Naive thymus-derived CD4-positive, alpha-beta T cell (primary cell): ENCODE measurements at regions of chr16 and their contacts with region 1.

Region 1: GRCh38 chr16:75432828-75433731 is at the start of gene CFDP1:
- DNase-seq: peak; percentile 93 to 98 (median 95)
- ATAC-seq: peak; percentile 92
- H3K4me3 ChIP-seq: peak within 1 kb of the TSS; percentile 92
- H3K4me3 Mint-ChIP-seq: peak within 1 kb of the TSS; percentile 87 to 99 (median 94)
- H3K27ac ChIP-seq: peak within 1 kb of the TSS; percentile 94
- H3K27ac Mint-ChIP-seq: peak within 1 kb of the TSS; percentile 94 to 100 (median 97)
- H3K4me1 ChIP-seq: peaks cover 5 to 9% of the 10 kb centered on the region in 2 donors
- H3K4me1 Mint-ChIP-seq: peaks cover 19 to 53% (median 43%) of the 10 kb centered on the region in 7 donors
- H3K27me3 ChIP-seq: no peaks in the 10 kb centered on the region
- H3K27me3 Mint-ChIP-seq: no peaks in the 10 kb centered on the region
- total RNA-seq, gene CFDP1: 34.9 to 41.4 (median 39.4) TPM

Region 2: DNA sequence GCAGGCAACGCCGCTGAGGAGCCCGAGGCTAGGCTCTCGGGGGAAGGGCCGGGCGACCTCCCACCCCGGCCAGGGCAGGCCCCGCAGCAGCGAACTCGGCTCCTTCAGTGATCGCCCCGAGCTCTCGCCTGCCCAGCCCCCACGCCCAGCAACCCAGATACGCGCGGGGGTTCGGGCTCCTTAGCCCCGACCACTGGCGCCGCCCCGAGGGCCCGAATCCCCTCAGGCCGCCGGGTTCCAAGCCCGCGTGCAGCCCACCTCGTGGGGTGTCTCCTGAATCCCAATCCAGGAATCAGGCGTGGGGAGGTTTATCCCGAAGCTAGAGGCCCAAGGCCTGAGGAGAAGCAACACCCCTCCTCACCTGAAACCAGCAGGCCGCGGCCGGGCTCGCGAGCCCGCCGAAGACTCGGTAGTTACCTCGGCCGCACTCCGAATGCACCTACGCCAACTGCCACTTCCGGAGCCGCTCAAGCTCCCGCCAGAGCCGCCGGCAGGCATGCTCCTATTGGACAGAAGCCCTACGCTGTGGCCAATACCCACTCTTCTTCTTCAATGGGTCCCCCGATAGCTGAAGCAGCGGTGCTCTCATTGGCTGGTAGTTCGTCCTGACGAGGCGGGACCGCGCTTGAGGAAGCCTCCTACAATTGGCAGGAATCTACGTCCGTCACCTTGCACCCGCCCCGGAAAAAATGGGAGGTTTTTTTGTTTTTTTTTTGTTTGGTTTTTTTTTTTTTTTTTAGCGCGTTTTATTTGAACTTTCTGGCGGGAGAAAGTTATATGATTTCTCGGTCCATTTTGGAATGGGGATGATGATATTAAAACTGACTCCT is 766.4 kb before region 1 on chr16 and contains the start of gene RFWD3:
- CTCF ChIA-PET with region 1: no interaction called
- POLR2A ChIA-PET with region 1: no interaction called
- intact Hi-C with region 1: loop called (anchors 1 kb)
- DNase-seq: peak; percentile 80 to 99 (median 97)
- ATAC-seq: peak; percentile 100
- H3K4me3 ChIP-seq: peak within 1 kb of the TSS; percentile 89
- H3K4me3 Mint-ChIP-seq: peak within 1 kb of the TSS; percentile 87 to 98 (median 95)
- H3K27ac ChIP-seq: peak within 1 kb of the TSS; percentile 86
- H3K27ac Mint-ChIP-seq: peak within 1 kb of the TSS; percentile 92 to 97 (median 95)
- H3K4me1 ChIP-seq: peaks cover 0 to 10% of the 10 kb centered on the region in 2 donors
- H3K4me1 Mint-ChIP-seq: peaks cover 26 to 48% (median 44%) of the 10 kb centered on the region in 7 donors
- H3K27me3 ChIP-seq: no peaks in the 10 kb centered on the region
- H3K27me3 Mint-ChIP-seq: peaks cover 0 to 2% (median 0%) of the 10 kb centered on the region in 5 donors
- total RNA-seq, gene RFWD3: 39.3 to 88.0 (median 56.9) TPM

Region 3: DNA sequence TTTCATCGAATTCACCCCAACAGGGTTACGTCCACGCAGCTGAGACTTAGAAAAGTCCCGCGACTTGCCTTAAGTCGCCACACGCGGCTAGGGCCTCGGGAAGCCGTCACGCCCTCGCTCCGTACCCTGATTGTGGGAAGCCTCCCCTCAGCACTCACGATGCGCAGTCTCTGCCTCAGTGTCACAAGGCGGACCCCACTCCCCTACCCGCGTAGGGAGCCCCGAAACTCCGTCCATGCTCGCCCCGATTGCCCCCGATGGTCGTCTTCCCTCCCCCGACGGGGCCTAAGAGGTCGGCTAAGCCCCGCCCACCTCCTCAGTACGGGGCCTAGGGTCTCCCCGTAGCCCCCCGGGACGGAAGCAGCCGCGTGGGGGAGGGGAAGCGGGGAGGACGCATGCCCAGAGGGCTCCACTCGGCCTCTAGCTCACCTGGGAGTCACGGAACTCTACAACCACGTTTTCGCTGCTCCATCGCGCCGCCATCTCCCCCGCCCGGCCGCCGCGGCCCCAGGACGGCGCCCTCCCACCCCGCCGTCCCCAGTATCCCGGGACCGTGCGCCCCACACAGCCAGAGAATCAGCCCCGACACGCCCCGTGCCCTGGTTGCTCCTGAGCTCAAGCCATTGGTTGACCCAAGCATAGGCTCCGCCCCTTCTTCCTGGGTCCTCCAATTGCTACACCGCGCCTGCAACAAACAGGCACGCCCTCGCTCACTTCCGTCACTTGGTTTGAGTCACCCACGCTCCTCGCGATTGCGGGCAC is 448.4 kb before region 1 on chr16 and contains the start of gene WDR59:
- CTCF ChIA-PET with region 1: no interaction called
- POLR2A ChIA-PET with region 1: interaction called, 4 read pairs
- intact Hi-C with region 1: loop called (anchors 1 to 2 kb)
- DNase-seq: peak; percentile 87 to 99 (median 98)
- ATAC-seq: peak; percentile 100
- H3K4me3 ChIP-seq: peak within 1 kb of the TSS; percentile 98
- H3K4me3 Mint-ChIP-seq: peak within 1 kb of the TSS; percentile 90 to 98 (median 95)
- H3K27ac ChIP-seq: peak within 1 kb of the TSS; percentile 86
- H3K27ac Mint-ChIP-seq: peak within 1 kb of the TSS; percentile 72 to 96 (median 92)
- H3K4me1 ChIP-seq: peaks cover 5 to 6% of the 10 kb centered on the region in 2 donors
- H3K4me1 Mint-ChIP-seq: peaks cover 0 to 27% (median 23%) of the 10 kb centered on the region in 7 donors
- H3K27me3 ChIP-seq: no peaks in the 10 kb centered on the region
- H3K27me3 Mint-ChIP-seq: no peaks in the 10 kb centered on the region
- total RNA-seq, gene WDR59: 82.7 to 130 (median 84.7) TPM

Region 4: GRCh38 chr16:75519881-75520280 is 86.8 kb after region 1 on chr16:
- CTCF ChIA-PET with region 1: interaction called, 4 read pairs
- POLR2A ChIA-PET with region 1: interaction called, 9 read pairs
- intact Hi-C with region 1: loop called (anchors 1 kb)
- DNase-seq: no peak
- ATAC-seq: no peak
- H3K4me3 ChIP-seq: no peak overlapping the region
- H3K4me3 Mint-ChIP-seq: no peak overlapping the region
- H3K27ac ChIP-seq: no peak overlapping the region
- H3K27ac Mint-ChIP-seq: no peak overlapping the region
- H3K4me1 ChIP-seq: peaks cover 0 to 3% of the 10 kb centered on the region in 2 donors
- H3K4me1 Mint-ChIP-seq: peaks cover 5 to 17% (median 13%) of the 10 kb centered on the region in 7 donors
- H3K27me3 ChIP-seq: no peaks in the 10 kb centered on the region
- H3K27me3 Mint-ChIP-seq: peaks cover 0 to 9% (median 0%) of the 10 kb centered on the region in 5 donors

Region 5: DNA sequence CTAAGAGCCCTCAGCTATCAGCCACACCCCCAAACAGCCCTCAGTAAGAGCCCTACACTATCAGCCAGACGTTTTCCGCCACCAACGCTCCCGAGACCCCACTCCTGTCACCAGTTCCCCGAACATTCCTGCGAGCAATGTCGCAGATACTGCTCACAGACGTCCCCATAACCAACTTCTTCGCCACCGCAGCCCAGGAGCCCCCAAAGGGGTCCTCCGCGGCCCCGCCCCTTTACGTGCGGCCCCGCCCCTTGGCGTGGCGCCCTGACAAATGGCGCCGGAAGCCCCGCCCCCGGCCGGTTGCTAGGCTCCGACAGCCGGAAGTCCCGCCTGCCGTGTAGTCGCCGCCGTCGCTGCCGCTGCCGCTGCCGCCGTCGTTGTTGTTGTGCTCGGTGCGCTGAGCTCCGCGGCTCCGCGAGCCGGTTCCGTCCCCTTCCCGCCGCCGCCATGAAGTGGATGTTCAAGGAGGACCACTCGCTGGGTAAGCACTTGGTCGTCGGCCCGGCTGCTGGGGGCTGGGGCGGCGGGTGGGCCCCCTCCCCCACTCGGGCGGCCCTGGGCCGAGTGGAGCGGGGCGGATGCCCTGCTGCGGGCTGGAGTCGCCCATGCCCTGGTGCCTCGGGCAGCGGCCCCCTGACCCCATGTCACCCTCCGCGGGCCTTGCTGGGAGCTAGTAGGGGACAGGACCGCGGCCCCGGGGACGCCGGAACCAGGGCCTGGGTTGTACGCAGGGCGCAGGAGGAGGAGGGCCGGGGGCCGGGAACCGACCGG is 133.1 kb after region 1 on chr16 and contains the start of gene GABARAPL2:
- CTCF ChIA-PET with region 1: no interaction called
- POLR2A ChIA-PET with region 1: interaction called, 9 read pairs
- intact Hi-C with region 1: loop called (anchors 1 kb)
- DNase-seq: peak; percentile 87 to 97 (median 92)
- ATAC-seq: peak; percentile 90
- H3K4me3 ChIP-seq: peak within 1 kb of the TSS; percentile 93
- H3K4me3 Mint-ChIP-seq: peak within 1 kb of the TSS; percentile 88 to 100 (median 96)
- H3K27ac ChIP-seq: peak within 1 kb of the TSS; percentile 90
- H3K27ac Mint-ChIP-seq: peak within 1 kb of the TSS; percentile 79 to 100 (median 92)
- H3K4me1 ChIP-seq: peaks cover 20 to 27% of the 10 kb centered on the region in 2 donors
- H3K4me1 Mint-ChIP-seq: peaks cover 25 to 50% (median 47%) of the 10 kb centered on the region in 7 donors
- H3K27me3 ChIP-seq: no peaks in the 10 kb centered on the region
- H3K27me3 Mint-ChIP-seq: peaks cover 8 to 16% (median 13%) of the 10 kb centered on the region in 5 donors
- total RNA-seq, gene GABARAPL2: 57.9 to 81.2 (median 75.6) TPM

Region 6: GRCh38 chr16:75801307-75801706 is 368.2 kb after region 1 on chr16:
- CTCF ChIA-PET with region 1: no interaction called
- POLR2A ChIA-PET with region 1: no interaction called
- intact Hi-C with region 1: no loop called
- DNase-seq: no peak
- ATAC-seq: no peak
- H3K4me3 ChIP-seq: no peak overlapping the region
- H3K4me3 Mint-ChIP-seq: no peak overlapping the region
- H3K27ac ChIP-seq: no peak overlapping the region
- H3K27ac Mint-ChIP-seq: no peak overlapping the region
- H3K4me1 ChIP-seq: no peaks in the 10 kb centered on the region
- H3K4me1 Mint-ChIP-seq: no peaks in the 10 kb centered on the region
- H3K27me3 ChIP-seq: no peaks in the 10 kb centered on the region
- H3K27me3 Mint-ChIP-seq: peaks cover 0 to 41% (median 34%) of the 10 kb centered on the region in 5 donors